Activated naive CD4-positive, alpha-beta T cell treated with anti-CD3 and anti-CD28 coated beads for 36 hours (primary cell): ENCODE measurements at regions of chr5 and their contacts with region 1.

Region 1: GRCh38 chr5:41924872-41925554 is at the start of gene FBXO4:
- DNase-seq: peak; percentile 89
- H3K4me3 Mint-ChIP-seq: peak within 1 kb of the TSS; percentile 85
- H3K27ac Mint-ChIP-seq: peak within 1 kb of the TSS; percentile 94
- H3K4me1 Mint-ChIP-seq: peaks cover 18% of the 10 kb centered on the region
- H3K27me3 Mint-ChIP-seq: no peaks in the 10 kb centered on the region
- total RNA-seq, gene FBXO4: 16.1 to 19.1 TPM

Region 2: DNA sequence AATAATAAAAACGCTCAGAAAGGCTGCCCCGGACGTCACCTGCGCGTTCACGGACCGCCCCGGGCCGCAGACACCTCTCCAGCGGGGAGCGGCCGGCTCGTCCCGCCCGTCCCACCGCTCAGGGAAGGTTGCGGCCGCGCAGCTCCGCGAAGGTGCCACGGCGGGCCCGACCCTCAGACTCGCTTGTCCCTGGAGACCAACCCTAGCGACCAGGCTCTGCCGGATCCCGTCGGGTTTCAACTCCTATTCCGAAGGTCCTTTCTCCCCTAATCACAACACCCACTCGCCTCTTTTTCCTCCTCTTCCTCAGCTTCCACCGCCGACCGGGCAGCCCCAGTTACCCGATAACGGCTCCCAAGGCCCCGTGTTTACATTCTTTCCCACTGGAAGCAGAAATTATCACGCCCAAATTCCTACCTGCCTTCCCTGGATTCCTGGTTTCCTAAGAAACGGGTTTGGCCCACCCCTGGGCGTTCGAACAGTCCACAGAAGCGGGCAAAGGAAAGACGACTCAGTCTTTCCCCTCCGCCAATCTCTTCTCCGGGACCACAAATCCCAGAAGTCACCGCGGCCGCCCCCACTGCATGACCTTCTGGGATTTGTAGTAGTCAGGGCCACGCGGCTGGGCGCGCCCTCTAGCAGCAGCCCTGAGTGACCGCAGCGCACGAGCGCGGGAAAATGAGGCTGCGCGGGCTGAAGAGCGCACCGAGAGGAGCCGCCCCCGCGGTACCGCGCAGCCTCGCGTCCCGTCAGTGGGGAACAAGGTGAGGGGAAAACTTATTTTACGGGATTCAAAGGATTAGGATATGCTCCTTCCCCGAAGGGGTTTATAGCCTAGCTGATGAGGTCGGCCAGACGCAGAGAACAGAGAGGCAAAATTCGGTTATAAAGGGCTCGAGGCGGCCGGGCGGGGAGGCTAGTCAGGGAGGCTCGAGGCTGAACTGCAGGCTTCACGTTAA is 1169.3 kb before region 1 on chr5 and contains the start of gene TTC33:
- CTCF ChIA-PET with region 1: no interaction called
- intact Hi-C with region 1: loop called (anchors 2 kb)
- DNase-seq: peak; percentile 98
- H3K4me3 Mint-ChIP-seq: no peak within 1 kb of the TSS
- H3K27ac Mint-ChIP-seq: no peak within 1 kb of the TSS
- H3K4me1 Mint-ChIP-seq: peaks cover 10% of the 10 kb centered on the region
- H3K27me3 Mint-ChIP-seq: no peaks in the 10 kb centered on the region
- total RNA-seq, gene TTC33: 24.4 to 27.4 TPM

Region 3: GRCh38 chr5:41748631-41749030 is 176.4 kb before region 1 on chr5:
- CTCF ChIA-PET with region 1: no interaction called
- intact Hi-C with region 1: loop called (anchors 5 kb)
- DNase-seq: peak; percentile 63
- H3K4me3 Mint-ChIP-seq: no peak overlapping the region
- H3K27ac Mint-ChIP-seq: no peak overlapping the region
- H3K4me1 Mint-ChIP-seq: peaks cover 34% of the 10 kb centered on the region
- H3K27me3 Mint-ChIP-seq: no peaks in the 10 kb centered on the region

Region 4: DNA sequence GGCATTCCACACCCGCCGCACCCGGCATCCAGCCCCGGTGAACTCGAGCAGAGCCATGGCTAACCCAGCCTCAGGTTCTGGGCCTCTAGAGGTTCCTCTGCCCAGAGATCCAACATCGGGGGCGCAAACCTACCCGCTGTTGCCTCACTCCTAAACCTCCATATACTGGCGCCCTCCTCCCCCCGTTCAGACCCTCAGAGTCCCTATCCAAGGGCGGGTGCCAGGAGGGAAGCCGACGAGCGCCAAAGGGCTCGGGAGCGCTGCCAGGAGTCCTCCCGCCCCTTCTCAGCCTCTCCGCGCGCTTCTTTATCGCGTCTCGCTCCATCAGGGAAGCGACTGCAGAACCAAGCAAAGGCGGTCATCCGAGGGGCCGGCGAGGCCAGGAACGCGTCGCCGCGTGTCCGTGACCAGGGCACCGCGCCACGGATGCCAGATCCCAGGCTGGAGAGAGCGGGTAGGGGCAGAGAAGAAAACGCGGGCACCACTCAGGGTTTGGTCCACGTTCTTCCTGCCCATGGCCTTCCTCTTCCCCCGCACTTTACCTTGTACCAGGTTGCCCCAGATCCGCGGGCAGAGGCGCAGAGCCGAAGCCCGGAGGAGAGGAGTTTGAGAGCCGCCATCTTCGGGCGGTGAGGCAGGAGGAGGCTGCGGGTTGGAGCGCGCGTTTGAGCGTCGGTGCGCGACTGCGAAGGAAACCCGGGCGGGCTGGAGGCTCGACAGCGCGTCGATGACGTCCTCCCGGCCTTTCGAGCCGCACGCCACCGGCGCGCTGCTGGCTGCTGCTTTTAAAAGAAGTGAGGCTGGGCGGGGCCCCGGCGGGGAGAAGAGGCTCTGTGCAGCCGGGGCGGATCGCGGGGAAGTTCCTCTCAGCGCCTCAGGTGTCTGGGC is 55.0 kb before region 1 on chr5 and contains the start of gene OXCT1:
- CTCF ChIA-PET with region 1: interaction called, 3 read pairs
- intact Hi-C with region 1: loop called (anchors 1 kb)
- DNase-seq: peak; percentile 93
- H3K4me3 Mint-ChIP-seq: peak within 1 kb of the TSS; percentile 92
- H3K27ac Mint-ChIP-seq: peak within 1 kb of the TSS; percentile 88
- H3K4me1 Mint-ChIP-seq: peaks cover 53% of the 10 kb centered on the region
- H3K27me3 Mint-ChIP-seq: no peaks in the 10 kb centered on the region
- total RNA-seq, gene OXCT1: 76.1 to 78.8 TPM

Region 5: GRCh38 chr5:41903892-41904799 is 20.9 kb before region 1 on chr5 and contains the start of gene RIMOC1:
- CTCF ChIA-PET with region 1: interaction called, 3 read pairs
- intact Hi-C with region 1: loop called (anchors 1 kb)
- DNase-seq: peak; percentile 98
- H3K4me3 Mint-ChIP-seq: peak within 1 kb of the TSS; percentile 79
- H3K27ac Mint-ChIP-seq: peak within 1 kb of the TSS; percentile 88
- H3K4me1 Mint-ChIP-seq: peaks cover 38% of the 10 kb centered on the region
- H3K27me3 Mint-ChIP-seq: no peaks in the 10 kb centered on the region
- total RNA-seq, gene RIMOC1: 16.6 to 19.6 TPM

Region 6: GRCh38 chr5:41995193-41995592 is 70.2 kb after region 1 on chr5:
- CTCF ChIA-PET with region 1: no interaction called
- intact Hi-C with region 1: no loop called
- DNase-seq: no peak
- H3K4me3 Mint-ChIP-seq: no peak overlapping the region
- H3K27ac Mint-ChIP-seq: no peak overlapping the region
- H3K4me1 Mint-ChIP-seq: no peaks in the 10 kb centered on the region
- H3K27me3 Mint-ChIP-seq: peaks cover 1% of the 10 kb centered on the region

Region 7: DNA sequence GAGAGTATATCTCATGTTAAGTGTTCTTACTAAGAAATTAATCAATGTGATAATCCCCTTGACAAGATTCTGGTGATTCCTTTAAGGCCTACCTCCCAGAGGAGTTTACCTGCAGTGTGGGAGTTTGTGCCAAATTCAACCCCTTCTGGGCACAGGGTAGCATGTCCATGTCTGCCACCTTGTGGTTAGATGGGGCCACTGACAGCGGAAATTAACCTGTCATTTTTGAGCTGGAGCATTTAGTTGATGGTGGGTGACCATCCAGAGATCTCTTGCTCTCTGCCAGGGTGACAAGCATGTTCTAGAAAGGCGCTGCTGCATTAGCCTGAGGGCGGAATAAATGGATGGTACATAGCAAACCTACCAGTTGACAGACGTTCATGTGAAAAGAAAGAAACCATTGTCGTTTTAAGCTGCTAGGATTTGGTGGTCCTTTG is 132.3 kb after region 1 on chr5:
- CTCF ChIA-PET with region 1: no interaction called
- intact Hi-C with region 1: loop called (anchors 5 kb)
- DNase-seq: peak; percentile 69
- H3K4me3 Mint-ChIP-seq: no peak overlapping the region
- H3K27ac Mint-ChIP-seq: no peak overlapping the region
- H3K4me1 Mint-ChIP-seq: no peaks in the 10 kb centered on the region
- H3K27me3 Mint-ChIP-seq: no peaks in the 10 kb centered on the region

Region 8: DNA sequence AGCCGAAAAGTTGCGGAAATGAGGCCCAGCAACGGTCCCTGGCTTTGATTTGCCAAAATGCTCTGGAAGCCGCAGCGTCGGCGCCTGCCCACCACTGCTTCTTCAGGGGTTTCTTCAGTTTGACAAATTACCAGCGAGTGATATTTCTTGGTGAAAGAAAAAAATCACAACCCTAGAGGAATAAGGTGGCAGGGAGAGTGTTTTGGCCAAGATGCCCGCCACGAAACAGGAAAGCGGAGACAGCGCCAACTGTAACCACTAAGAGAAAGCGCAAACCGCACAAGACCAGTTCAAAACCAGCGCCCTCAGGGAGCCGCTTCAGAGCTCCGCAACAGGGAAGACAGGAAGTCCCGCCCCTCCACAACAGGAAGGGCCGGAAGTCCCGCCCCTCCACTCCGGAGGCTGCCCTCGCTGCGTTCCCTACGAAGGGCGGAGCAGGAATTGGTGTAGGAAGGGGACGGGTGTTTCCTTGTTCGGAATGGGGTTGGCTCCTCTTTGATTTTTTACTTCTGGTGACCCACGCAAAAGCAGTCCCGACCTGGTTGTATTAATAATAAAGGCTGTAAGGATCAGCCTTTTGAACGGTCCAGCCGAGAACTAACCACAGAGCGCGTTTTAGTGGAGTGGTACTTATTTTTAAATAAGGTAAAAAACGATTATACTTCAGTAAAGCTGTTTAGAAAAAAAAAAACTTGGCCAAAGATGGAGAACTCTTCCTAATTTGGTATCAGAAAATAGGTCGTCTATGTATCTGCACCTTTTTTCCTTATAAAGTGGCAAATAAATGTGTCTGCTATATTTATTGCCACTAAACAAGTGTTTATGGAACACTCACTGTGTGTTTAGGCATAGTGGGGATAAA is 1590.0 kb after region 1 on chr5 and contains the start of gene C5orf34:
- CTCF ChIA-PET with region 1: no interaction called
- intact Hi-C with region 1: loop called (anchors 10 kb)
- DNase-seq: peak; percentile 98
- H3K4me3 Mint-ChIP-seq: peak within 1 kb of the TSS; percentile 94
- H3K27ac Mint-ChIP-seq: peak within 1 kb of the TSS; percentile 99
- H3K4me1 Mint-ChIP-seq: peaks cover 25% of the 10 kb centered on the region
- H3K27me3 Mint-ChIP-seq: no peaks in the 10 kb centered on the region
- total RNA-seq, gene C5orf34: 14.7 to 16.3 TPM